CD4-positive, alpha-beta T cell (primary cell): ENCODE measurements at regions of chr5 and their contacts with region 1.

Region 1: GRCh38 chr5:79069488-79070349 is at the starts of genes BHMT2 and DMGDH:
- DNase-seq: no peak
- ATAC-seq: no peak
- H3K4me3 ChIP-seq: no peak within 1 kb of the TSS
- H3K4me3 Mint-ChIP-seq: no peak within 1 kb of the TSS
- H3K27ac ChIP-seq: no peak within 1 kb of the TSS
- H3K27ac Mint-ChIP-seq: no peak within 1 kb of the TSS
- H3K4me1 ChIP-seq: no peaks in the 10 kb centered on the region
- H3K4me1 Mint-ChIP-seq: no peaks in the 10 kb centered on the region
- H3K27me3 ChIP-seq: peaks cover 15 to 29% of the 10 kb centered on the region in 2 experiments
- H3K27me3 Mint-ChIP-seq: peaks cover 64% of the 10 kb centered on the region
- CTCF ChIP-seq: no peak
- total RNA-seq, gene BHMT2: not detected
- total RNA-seq, gene DMGDH: 0.50 TPM in 1 of 2 experiments, not detected in the other

Region 2: GRCh38 chr5:78738693-78739300 is 330.9 kb before region 1 on chr5:
- CTCF ChIA-PET with region 1: no interaction called
- POLR2A ChIA-PET with region 1: no interaction called
- intact Hi-C with region 1: loop called in 1 of 2 experiments (anchors 5 kb)
- DNase-seq: no peak
- ATAC-seq: no peak
- H3K4me3 ChIP-seq: no peak overlapping the region
- H3K4me3 Mint-ChIP-seq: no peak overlapping the region
- H3K27ac ChIP-seq: no peak overlapping the region
- H3K27ac Mint-ChIP-seq: no peak overlapping the region
- H3K4me1 ChIP-seq: no peaks in the 10 kb centered on the region
- H3K4me1 Mint-ChIP-seq: no peaks in the 10 kb centered on the region
- H3K27me3 ChIP-seq: no peaks in the 10 kb centered on the region
- H3K27me3 Mint-ChIP-seq: no peaks in the 10 kb centered on the region
- CTCF ChIP-seq: no peak